ENCODE measurements at regions of chr5 and their contacts with region 1.

Region 1: GRCh38 chr5:143435210-143435657 is 31.7 kb upstream of the NR3C1 start:
- DNase-seq: peak in 3 of 5 donors; percentile 17 to 28 (median 22)
- ATAC-seq: peak in 3 of 4 donors; percentile 60 to 77 (median 70)
- H3K4me3 ChIP-seq: peak overlapping the region in 8 of 12 donors; percentile 4 to 43 (median 21)
- H3K27ac ChIP-seq: peak overlapping the region in 5 of 12 donors; percentile 5 to 82 (median 39)
- H3K4me1 ChIP-seq: peaks cover 0 to 26% (median 5%) of the 10 kb centered on the region in 12 donors
- H3K27me3 ChIP-seq: no peaks in the 10 kb centered on the region
- CTCF ChIP-seq: no peak
- POLR2A ChIP-seq: no peak

Region 2: GRCh38 chr5:143471041-143471521 is 35.8 kb after region 1 on chr5:
- intact Hi-C with region 1: loop called in 1 of 10 experiments (anchors 5 kb)
- DNase-seq: peak in 1 of 5 donors; percentile 28
- ATAC-seq: peak; percentile 52 to 76 (median 60)
- H3K4me3 ChIP-seq: no peak overlapping the region
- H3K27ac ChIP-seq: no peak overlapping the region
- H3K4me1 ChIP-seq: peaks cover 0 to 19% (median 7%) of the 10 kb centered on the region in 12 donors
- H3K27me3 ChIP-seq: no peaks in the 10 kb centered on the region
- CTCF ChIP-seq: no peak
- POLR2A ChIP-seq: no peak

Region 3: DNA sequence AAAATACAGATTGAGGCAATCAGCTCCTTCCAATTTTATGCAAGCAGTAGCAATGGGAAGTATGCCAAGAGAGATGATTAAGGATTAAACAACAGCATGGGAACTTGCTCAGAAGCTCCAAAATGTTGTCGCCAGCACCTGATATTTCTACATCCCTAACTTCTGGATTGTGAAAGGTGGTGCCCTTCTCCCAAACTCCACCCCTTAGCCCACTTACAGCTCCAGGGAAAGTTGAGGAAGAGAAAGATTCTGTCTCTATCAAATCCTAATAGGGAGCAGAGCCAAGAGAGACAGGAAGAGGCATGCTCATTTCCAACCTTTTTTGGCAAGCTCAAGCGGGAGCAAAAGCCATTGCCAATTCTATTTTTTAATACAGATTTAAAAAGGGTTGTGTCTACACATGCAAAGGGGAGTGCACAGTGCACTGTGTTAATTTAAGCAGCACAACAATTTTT is 60.6 kb after region 1 on chr5:
- intact Hi-C with region 1: loop called in 1 of 10 experiments (anchors 10 kb)
- DNase-seq: peak in 3 of 5 donors; percentile 23 to 42 (median 40)
- ATAC-seq: peak; percentile 59 to 80 (median 68)
- H3K4me3 ChIP-seq: no peak overlapping the region
- H3K27ac ChIP-seq: peak overlapping the region in 8 of 12 donors; percentile 11 to 58 (median 18)
- H3K4me1 ChIP-seq: peaks cover 0 to 43% (median 16%) of the 10 kb centered on the region in 12 donors
- H3K27me3 ChIP-seq: no peaks in the 10 kb centered on the region
- CTCF ChIP-seq: no peak
- POLR2A ChIP-seq: no peak

Region 4: DNA sequence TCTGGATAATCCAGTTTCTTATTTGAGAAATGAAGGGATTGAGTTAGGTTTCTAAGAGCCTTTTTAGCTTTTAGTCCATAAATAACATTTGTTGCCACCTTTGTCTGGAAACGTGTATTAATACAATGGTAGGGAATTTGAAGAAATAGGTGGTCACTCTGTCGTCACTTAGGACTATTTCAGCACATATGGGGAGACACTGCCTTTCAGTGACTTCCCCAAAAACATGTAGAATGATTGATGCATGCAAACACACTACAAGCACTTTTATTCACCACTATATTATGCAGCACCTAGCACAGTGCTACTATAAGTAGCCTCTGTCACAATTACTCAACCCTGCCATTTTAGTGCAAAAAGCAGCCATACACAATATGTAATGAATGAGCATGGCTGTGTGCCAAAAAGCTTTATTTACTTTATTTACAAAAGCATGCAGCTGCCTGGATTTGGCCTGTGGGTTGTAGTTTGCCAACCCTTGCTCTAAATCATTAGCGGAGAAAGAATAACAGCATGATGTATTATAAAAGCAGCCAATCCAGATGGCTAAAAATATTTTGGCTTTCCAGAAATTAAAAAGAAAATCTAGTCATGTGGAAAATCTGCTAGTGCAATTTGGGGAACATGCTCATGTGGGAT is 222.5 kb after region 1 on chr5:
- intact Hi-C with region 1: no loop called
- DNase-seq: no peak
- ATAC-seq: no peak
- H3K4me3 ChIP-seq: no peak overlapping the region
- H3K27ac ChIP-seq: no peak overlapping the region
- H3K4me1 ChIP-seq: peaks cover 0 to 4% (median 0%) of the 10 kb centered on the region in 12 donors
- H3K27me3 ChIP-seq: no peaks in the 10 kb centered on the region
- CTCF ChIP-seq: no peak
- POLR2A ChIP-seq: no peak

Measured in heart left ventricle (tissue), 16 donors.